CD14-positive monocyte (primary cell): ENCODE measurements at regions of chr1 and their contacts with region 1.

Region 1: GRCh38 chr1:3004285-3005205 is 16.7 kb upstream of the ACTRT2 start:
- DNase-seq: no peak
- H3K4me3 ChIP-seq: no peak overlapping the region
- H3K4me3 Mint-ChIP-seq: no peak overlapping the region
- H3K27ac ChIP-seq: no peak overlapping the region
- H3K27ac Mint-ChIP-seq: no peak overlapping the region
- H3K4me1 ChIP-seq: no peaks in the 10 kb centered on the region
- H3K4me1 Mint-ChIP-seq: no peaks in the 10 kb centered on the region
- H3K27me3 ChIP-seq: no peaks in the 10 kb centered on the region
- H3K27me3 Mint-ChIP-seq: peaks cover 0 to 2% (median 0%) of the 10 kb centered on the region in 3 donors
- CTCF ChIP-seq: no peak

Region 2: GRCh38 chr1:1669468-1670440 is 1334.8 kb before region 1 on chr1:
- intact Hi-C with region 1: no loop called
- DNase-seq: no peak
- H3K4me3 ChIP-seq: no peak overlapping the region
- H3K4me3 Mint-ChIP-seq: no peak overlapping the region
- H3K27ac ChIP-seq: no peak overlapping the region
- H3K27ac Mint-ChIP-seq: peak overlapping the region in 5 of 7 donors; percentile 41 to 68 (median 48)
- H3K4me1 ChIP-seq: no peaks in the 10 kb centered on the region
- H3K4me1 Mint-ChIP-seq: peaks cover 4% of the 10 kb centered on the region
- H3K27me3 ChIP-seq: no peaks in the 10 kb centered on the region
- H3K27me3 Mint-ChIP-seq: peaks cover 0 to 2% (median 1%) of the 10 kb centered on the region in 3 donors
- CTCF ChIP-seq: no peak

Region 3: GRCh38 chr1:3423245-3423829 is 418.8 kb after region 1 on chr1:
- intact Hi-C with region 1: loop called in 1 of 2 experiments (anchors 5 kb)
- DNase-seq: no peak
- H3K4me3 ChIP-seq: no peak overlapping the region
- H3K4me3 Mint-ChIP-seq: no peak overlapping the region
- H3K27ac ChIP-seq: no peak overlapping the region
- H3K27ac Mint-ChIP-seq: no peak overlapping the region
- H3K4me1 ChIP-seq: no peaks in the 10 kb centered on the region
- H3K4me1 Mint-ChIP-seq: no peaks in the 10 kb centered on the region
- H3K27me3 ChIP-seq: peaks cover 0 to 2% of the 10 kb centered on the region in 2 donors
- H3K27me3 Mint-ChIP-seq: peaks cover 9 to 16% (median 14%) of the 10 kb centered on the region in 3 donors
- CTCF ChIP-seq: no peak